AG04450 (cell line): ENCODE measurements at regions of chr3 and their contacts with region 1.

Region 1: DNA sequence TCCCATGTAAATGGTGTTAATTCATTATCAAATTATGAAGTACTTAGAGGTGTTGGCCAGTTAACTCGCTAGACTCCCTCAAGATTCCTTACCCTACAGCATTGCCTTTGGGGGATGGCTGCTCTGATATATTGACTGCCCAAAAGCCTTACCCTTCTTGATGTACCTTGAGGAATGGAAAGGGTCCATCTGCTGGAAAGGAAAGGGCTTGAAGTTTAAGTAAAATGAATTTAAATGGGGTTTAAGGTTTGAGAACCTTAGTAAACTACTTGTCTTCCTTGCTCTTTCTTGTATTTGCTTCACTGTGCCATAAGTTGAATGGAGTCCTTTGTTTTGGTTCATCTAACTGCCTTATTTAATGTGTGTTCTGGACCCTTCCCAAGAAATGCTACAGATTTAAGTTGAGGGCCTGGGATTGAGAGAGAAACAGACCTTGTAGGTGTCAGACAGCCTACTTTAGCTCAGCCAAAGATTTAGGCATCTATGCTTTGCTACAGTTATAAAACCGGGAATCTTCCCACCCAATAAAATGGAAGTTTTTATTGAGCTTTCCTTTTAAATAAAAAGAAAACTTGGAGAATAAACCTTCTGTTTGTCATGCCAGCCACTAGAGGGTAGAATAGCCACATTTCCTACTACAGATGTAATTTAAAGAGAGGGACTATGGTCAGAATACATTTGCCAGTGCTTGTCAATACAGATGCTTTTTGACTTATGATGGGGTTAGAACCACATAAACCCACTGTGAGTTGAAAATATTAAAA is 25.3 kb downstream of the CMSS1 start:
- DNase-seq: no peak
- H3K4me3 ChIP-seq: no peak overlapping the region
- H3K27ac ChIP-seq: no peak overlapping the region
- H3K27me3 ChIP-seq: no peaks in the 10 kb centered on the region
- CTCF ChIP-seq: peak; percentile 76

Region 2: GRCh38 chr3:99384596-99384995 is 458.4 kb before region 1 on chr3:
- CTCF ChIA-PET with region 1: no interaction called
- POLR2A ChIA-PET with region 1: no interaction called
- DNase-seq: no peak
- H3K4me3 ChIP-seq: no peak overlapping the region
- H3K27ac ChIP-seq: no peak overlapping the region
- H3K27me3 ChIP-seq: no peaks in the 10 kb centered on the region
- CTCF ChIP-seq: no peak

Region 3: GRCh38 chr3:99731499-99731898 is 111.5 kb before region 1 on chr3:
- CTCF ChIA-PET with region 1: no interaction called
- POLR2A ChIA-PET with region 1: no interaction called
- DNase-seq: no peak
- H3K4me3 ChIP-seq: no peak overlapping the region
- H3K27ac ChIP-seq: no peak overlapping the region
- H3K27me3 ChIP-seq: no peaks in the 10 kb centered on the region
- CTCF ChIP-seq: no peak

Region 4: GRCh38 chr3:99859825-99860224 is 16.8 kb after region 1 on chr3:
- CTCF ChIA-PET with region 1: interaction called, 22 read pairs
- POLR2A ChIA-PET with region 1: no interaction called
- DNase-seq: peak; percentile 72
- H3K4me3 ChIP-seq: no peak overlapping the region
- H3K27ac ChIP-seq: no peak overlapping the region
- H3K27me3 ChIP-seq: no peaks in the 10 kb centered on the region
- CTCF ChIP-seq: no peak

Region 5: DNA sequence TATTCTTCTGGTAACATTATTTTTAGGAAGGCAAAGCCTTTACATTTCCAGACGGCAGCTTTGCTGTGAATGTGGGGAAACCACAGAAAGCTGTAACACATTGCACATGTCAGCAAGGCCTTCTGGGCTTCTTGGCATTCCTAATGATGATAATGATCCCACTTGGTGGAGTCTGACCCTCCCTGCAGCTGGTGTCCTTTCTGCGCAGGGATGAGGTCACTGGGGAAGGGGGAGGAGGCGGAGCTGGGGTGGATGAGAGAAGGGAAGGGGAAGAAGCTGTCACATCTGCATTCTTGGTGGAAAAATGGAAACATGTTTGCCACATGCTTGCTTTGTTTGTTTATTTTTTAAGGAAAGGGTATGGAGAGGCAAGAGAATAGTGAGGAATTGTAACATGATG is 202.7 kb after region 1 on chr3:
- CTCF ChIA-PET with region 1: interaction called, 14 read pairs
- POLR2A ChIA-PET with region 1: no interaction called
- DNase-seq: peak; percentile 98
- H3K4me3 ChIP-seq: no peak overlapping the region
- H3K27ac ChIP-seq: peak overlapping the region; percentile 73
- H3K27me3 ChIP-seq: no peaks in the 10 kb centered on the region
- CTCF ChIP-seq: no peak

Region 6: DNA sequence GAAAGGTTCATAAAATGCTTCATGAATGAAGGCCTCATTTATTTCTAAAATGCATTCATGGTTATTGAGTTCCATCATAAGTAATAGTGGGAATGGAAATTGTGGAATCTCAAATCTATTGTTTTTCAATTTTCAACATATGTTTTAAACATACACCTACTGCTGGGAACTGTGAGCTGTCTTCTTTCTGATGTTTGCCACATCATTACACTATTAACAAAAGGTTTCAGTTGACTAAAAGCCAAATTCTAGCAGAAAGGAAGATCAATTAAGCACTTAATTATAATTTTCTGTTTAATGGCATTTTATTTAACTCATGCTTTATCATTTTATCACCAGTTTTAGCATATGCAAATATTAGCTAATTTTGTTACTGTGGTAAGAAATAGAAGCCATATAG is 404.0 kb after region 1 on chr3:
- CTCF ChIA-PET with region 1: interaction called, 12 read pairs
- POLR2A ChIA-PET with region 1: no interaction called
- DNase-seq: no peak
- H3K4me3 ChIP-seq: no peak overlapping the region
- H3K27ac ChIP-seq: no peak overlapping the region
- H3K27me3 ChIP-seq: no peaks in the 10 kb centered on the region
- CTCF ChIP-seq: no peak

Region 7: GRCh38 chr3:100260685-100261484 is 417.9 kb after region 1 on chr3 and contains the start of gene TBC1D23:
- CTCF ChIA-PET with region 1: interaction called, 56 read pairs
- POLR2A ChIA-PET with region 1: interaction called, 4 read pairs
- DNase-seq: peak; percentile 99
- H3K4me3 ChIP-seq: peak within 1 kb of the TSS; percentile 97
- H3K27ac ChIP-seq: peak within 1 kb of the TSS; percentile 98
- H3K27me3 ChIP-seq: no peaks in the 10 kb centered on the region
- CTCF ChIP-seq: 0 out of 2 replicates have a peak, but pooled peaks have one; percentile 4
- polyA plus RNA-seq, gene TBC1D23: 46.8 and 65.7 TPM in 2 replicates